ENCODE measurements at regions of chr2 and their contacts with region 1.

Region 1: GRCh38 chr2:62570861-62571698 is 65.1 kb upstream of the TMEM17 start:
- DNase-seq: peak; percentile 44
- H3K4me3 Mint-ChIP-seq: peak overlapping the region; percentile 70
- H3K27ac Mint-ChIP-seq: peak overlapping the region; percentile 94
- H3K4me1 Mint-ChIP-seq: peaks cover 65% of the 10 kb centered on the region
- H3K27me3 Mint-ChIP-seq: no peaks in the 10 kb centered on the region
- CTCF ChIP-seq: no peak

Region 2: DNA sequence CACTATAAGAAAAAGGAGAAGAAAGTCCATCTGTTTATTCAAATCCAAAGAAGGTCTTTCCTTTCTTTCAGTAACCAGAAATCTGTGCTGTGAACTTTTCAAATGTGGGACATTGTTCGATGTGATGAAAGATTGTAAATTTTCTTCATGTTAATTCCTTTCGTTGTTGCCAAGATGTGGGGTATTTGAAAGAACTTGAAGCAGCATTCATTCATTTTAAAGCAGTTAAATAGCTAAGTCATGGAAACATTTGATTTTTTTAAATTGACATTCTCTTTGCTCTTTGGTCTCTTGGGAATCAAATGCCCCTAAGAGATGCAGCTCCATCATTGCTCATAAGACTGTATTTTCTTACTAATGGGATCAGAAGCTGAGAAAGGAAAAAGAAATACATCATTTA is 40.8 kb after region 1 on chr2:
- CTCF ChIA-PET with region 1: no interaction called
- intact Hi-C with region 1: loop called (anchors 2 kb)
- DNase-seq: no peak
- H3K4me3 Mint-ChIP-seq: no peak overlapping the region
- H3K27ac Mint-ChIP-seq: no peak overlapping the region
- H3K4me1 Mint-ChIP-seq: peaks cover 9% of the 10 kb centered on the region
- H3K27me3 Mint-ChIP-seq: no peaks in the 10 kb centered on the region
- CTCF ChIP-seq: no peak

Region 3: GRCh38 chr2:62733546-62733945 is 162.5 kb after region 1 on chr2:
- CTCF ChIA-PET with region 1: no interaction called
- intact Hi-C with region 1: no loop called
- DNase-seq: no peak
- H3K4me3 Mint-ChIP-seq: no peak overlapping the region
- H3K27ac Mint-ChIP-seq: peak overlapping the region; percentile 30
- H3K4me1 Mint-ChIP-seq: peaks cover 50% of the 10 kb centered on the region
- H3K27me3 Mint-ChIP-seq: no peaks in the 10 kb centered on the region
- CTCF ChIP-seq: no peak

Measured in Calu3 (cell line).